Prostate gland (tissue), 2 donors: ENCODE measurements at regions of chr9 and their contacts with region 1.

Region 1: GRCh38 chr9:126490871-126491567 is 122.7 kb upstream of the LMX1B start:
- DNase-seq: peak; percentile 58
- H3K4me3 ChIP-seq: no peak overlapping the region
- H3K27ac ChIP-seq: no peak overlapping the region
- H3K4me1 ChIP-seq: no peaks in the 10 kb centered on the region
- H3K27me3 ChIP-seq: no peaks in the 10 kb centered on the region
- CTCF ChIP-seq: peak; percentile 84 to 96 (median 92)
- POLR2A ChIP-seq: no peak

Region 2: DNA sequence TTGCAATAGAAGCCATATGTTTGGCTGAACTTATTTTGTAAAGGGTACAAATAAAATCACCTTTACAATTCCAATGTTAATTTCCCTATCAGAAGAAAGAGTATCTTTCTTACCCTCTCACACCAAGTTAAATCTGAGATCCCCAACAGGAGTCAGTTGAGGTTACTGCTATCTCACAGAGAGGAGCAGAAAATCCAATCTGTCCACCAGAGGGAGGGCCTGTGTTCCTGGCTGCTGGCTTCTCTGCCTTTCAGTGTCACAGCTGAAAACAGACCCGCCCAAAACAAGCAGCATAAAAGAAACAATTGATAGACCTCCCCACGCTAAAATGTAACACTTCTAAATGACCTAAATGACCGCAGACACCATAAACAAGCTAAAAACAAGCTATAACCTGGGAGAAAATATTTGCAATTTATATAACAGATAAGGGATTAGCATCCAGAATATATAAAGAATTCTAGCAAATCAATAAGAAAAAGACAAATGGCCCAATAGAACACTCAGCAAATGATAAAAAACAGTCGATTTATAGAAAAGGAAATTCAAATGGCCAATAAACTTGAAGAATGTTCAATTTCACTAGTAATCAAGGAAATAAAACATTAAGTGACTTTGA is 188.9 kb before region 1 on chr9:
- intact Hi-C with region 1: loop called (anchors 2 kb)
- DNase-seq: peak; percentile 56
- H3K4me3 ChIP-seq: no peak overlapping the region
- H3K27ac ChIP-seq: no peak overlapping the region
- H3K4me1 ChIP-seq: no peaks in the 10 kb centered on the region
- H3K27me3 ChIP-seq: no peaks in the 10 kb centered on the region
- CTCF ChIP-seq: peak; percentile 13 to 73 (median 68)
- POLR2A ChIP-seq: no peak

Region 3: DNA sequence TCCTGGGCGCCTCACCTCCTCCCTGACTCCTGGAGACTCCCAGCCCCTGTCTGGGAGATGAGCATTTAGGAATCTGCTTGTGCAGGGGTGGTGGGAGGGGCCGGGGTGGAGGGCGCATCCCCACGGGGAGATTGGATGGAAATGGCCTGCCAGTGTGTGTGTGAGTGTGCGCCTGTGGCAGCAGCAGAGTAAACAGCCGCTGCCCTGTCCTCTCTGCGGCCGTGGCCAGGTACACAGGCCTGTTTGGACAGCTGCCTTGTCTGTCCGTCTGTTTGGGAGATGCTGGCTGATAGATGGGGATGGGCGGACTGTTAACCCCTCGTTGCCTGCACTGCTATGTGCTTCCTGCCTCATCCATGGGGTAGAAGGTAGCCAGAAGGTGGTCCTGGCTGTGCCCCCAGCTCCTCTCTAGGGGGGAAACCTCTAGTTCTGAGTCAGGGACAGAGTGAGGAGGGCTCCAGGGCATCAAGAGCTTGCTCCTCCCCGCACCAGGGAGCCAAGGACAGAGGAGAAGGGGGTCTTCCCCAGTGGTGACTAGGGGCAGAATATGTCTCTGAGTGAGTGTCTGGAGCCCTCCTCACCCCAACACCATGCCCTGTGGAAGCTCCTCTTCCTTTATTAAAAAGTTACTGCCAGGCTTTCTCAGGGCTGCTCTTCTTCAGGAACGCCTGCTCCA is 182.8 kb after region 1 on chr9:
- intact Hi-C with region 1: no loop called
- DNase-seq: peak; percentile 47
- H3K4me3 ChIP-seq: no peak overlapping the region
- H3K27ac ChIP-seq: no peak overlapping the region
- H3K4me1 ChIP-seq: no peaks in the 10 kb centered on the region
- H3K27me3 ChIP-seq: peaks cover 18% of the 10 kb centered on the region
- CTCF ChIP-seq: no peak
- POLR2A ChIP-seq: no peak